Naive thymus-derived CD4-positive, alpha-beta T cell (primary cell): ENCODE measurements at regions of chr6 and their contacts with region 1.

Region 1: GRCh38 chr6:41920921-41921711 is at the starts of genes BYSL and MED20:
- DNase-seq: peak; percentile 93 to 99 (median 96)
- ATAC-seq: peak; percentile 96
- H3K4me3 ChIP-seq: peak within 1 kb of the TSS; percentile 76
- H3K4me3 Mint-ChIP-seq: peak within 1 kb of the TSS; percentile 95 to 100 (median 99)
- H3K27ac ChIP-seq: peak within 1 kb of the TSS; percentile 95
- H3K27ac Mint-ChIP-seq: peak within 1 kb of the TSS; percentile 94 to 100 (median 99)
- H3K4me1 ChIP-seq: peaks cover 20 to 24% of the 10 kb centered on the region in 2 donors
- H3K4me1 Mint-ChIP-seq: peaks cover 27 to 58% (median 50%) of the 10 kb centered on the region in 7 donors
- H3K27me3 ChIP-seq: no peaks in the 10 kb centered on the region
- H3K27me3 Mint-ChIP-seq: peaks cover 0 to 3% (median 0%) of the 10 kb centered on the region in 5 donors
- total RNA-seq, gene BYSL: 3.9 to 35.7 (median 8.1) TPM
- total RNA-seq, gene MED20: 4.5 to 21.7 (median 9.4) TPM

Region 2: GRCh38 chr6:41901882-41902519 is 19.1 kb before region 1 on chr6:
- CTCF ChIA-PET with region 1: interaction called, 3 read pairs
- POLR2A ChIA-PET with region 1: no interaction called
- intact Hi-C with region 1: loop called in 1 of 2 experiments (anchors 2 kb)
- DNase-seq: peak in 8 of 9 donors; percentile 42 to 66 (median 52)
- ATAC-seq: peak; percentile 78
- H3K4me3 ChIP-seq: no peak overlapping the region
- H3K4me3 Mint-ChIP-seq: no peak overlapping the region
- H3K27ac ChIP-seq: no peak overlapping the region
- H3K27ac Mint-ChIP-seq: peak overlapping the region in 7 of 9 donors; percentile 5 to 61 (median 14)
- H3K4me1 ChIP-seq: peaks cover 0 to 7% of the 10 kb centered on the region in 2 donors
- H3K4me1 Mint-ChIP-seq: peaks cover 8 to 27% (median 23%) of the 10 kb centered on the region in 7 donors
- H3K27me3 ChIP-seq: no peaks in the 10 kb centered on the region
- H3K27me3 Mint-ChIP-seq: no peaks in the 10 kb centered on the region

Region 3: DNA sequence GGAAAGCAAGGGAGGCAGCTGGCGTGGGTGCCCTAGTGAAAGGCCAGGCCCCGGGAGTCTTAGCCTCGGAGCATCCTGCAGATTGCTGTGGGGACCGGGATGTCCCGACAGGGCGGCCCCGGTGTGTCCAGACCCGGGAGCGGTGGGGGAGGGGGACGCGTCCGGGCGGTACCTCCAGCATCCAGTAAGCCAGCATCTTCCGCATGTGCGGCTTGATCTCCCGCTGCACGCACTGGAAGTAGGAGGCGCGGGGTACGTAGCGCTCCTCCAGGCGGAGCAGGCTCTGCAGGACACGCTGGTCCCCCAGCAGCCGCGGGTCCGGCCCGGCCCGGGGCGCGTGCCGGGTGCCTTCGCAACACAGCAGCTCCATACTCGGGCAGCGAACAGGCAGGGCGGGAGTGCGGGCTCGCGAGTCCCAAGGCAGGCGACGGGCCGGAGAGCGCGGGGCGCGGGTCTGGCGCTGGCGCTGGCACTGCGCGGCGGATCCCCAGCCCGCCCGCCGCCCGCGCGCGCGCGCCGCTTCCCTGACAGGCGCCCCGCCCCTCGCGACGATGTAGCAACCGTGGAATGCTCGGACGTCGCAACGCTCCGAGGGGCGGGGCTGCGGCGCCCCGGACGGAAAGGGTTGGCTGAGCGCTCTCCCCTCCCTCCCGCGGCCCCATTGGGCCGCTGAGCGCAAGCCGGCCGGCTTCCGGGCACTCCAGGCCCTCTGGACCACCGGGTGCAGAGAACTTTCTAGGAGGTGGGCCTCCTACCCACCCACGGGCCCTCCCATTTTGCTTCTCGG is 20.4 kb after region 1 on chr6 and contains the start of gene CCND3:
- CTCF ChIA-PET with region 1: interaction called, 27 read pairs
- POLR2A ChIA-PET with region 1: interaction called, 22 read pairs
- intact Hi-C with region 1: loop called (anchors 1 kb)
- DNase-seq: peak; percentile 63 to 93 (median 76)
- ATAC-seq: peak; percentile 86
- H3K4me3 ChIP-seq: peak within 1 kb of the TSS; percentile 68
- H3K4me3 Mint-ChIP-seq: peak within 1 kb of the TSS; percentile 91 to 100 (median 93)
- H3K27ac ChIP-seq: peak within 1 kb of the TSS; percentile 76
- H3K27ac Mint-ChIP-seq: peak within 1 kb of the TSS; percentile 90 to 96 (median 94)
- H3K4me1 ChIP-seq: peaks cover 51 to 68% of the 10 kb centered on the region in 2 donors
- H3K4me1 Mint-ChIP-seq: peaks cover 40 to 83% (median 69%) of the 10 kb centered on the region in 7 donors
- H3K27me3 ChIP-seq: no peaks in the 10 kb centered on the region
- H3K27me3 Mint-ChIP-seq: no peaks in the 10 kb centered on the region
- total RNA-seq, gene CCND3: 285 to 433 (median 313) TPM

Region 4: DNA sequence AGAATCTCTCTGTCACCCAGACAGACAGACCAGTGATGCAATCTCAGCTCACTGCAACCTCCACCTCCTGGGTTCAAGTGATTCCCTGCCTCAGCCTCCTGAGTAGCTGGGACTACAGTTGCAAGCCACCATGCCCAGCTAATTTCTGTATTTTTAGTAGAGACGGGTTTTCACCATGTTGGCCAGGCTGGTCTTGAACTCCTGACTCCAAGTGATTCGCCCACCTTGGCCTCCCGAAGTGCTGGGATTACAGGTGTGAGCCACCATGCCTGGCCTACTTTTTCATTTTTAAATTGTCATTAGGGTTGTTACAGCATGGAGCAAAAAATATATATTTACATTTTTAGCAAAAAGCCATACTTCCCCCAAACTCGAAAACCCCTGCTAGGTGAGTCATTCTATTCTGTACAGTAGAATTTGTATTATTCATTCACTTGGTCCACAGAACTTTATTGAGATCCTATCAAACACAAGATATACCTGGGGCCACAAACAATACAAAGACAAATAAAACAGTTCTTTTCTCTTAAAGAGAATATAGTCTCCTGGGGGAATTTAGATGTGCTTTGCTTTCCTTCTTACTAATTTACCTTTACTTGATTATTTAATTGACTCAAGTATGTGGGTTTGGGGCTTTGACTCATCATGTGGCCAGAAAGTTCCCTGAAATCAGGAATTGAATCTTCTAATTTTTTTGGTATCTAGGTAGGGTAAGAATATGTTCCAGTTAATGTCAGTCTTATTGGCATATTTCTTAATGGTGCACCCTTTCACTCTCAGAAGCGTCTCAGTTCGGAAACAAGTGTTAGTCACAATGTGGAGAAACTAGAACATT is 37.1 kb after region 1 on chr6:
- CTCF ChIA-PET with region 1: no interaction called
- POLR2A ChIA-PET with region 1: no interaction called
- intact Hi-C with region 1: no loop called
- DNase-seq: no peak
- ATAC-seq: no peak
- H3K4me3 ChIP-seq: no peak overlapping the region
- H3K4me3 Mint-ChIP-seq: peak overlapping the region in 8 of 10 donors; percentile 14 to 64 (median 46)
- H3K27ac ChIP-seq: peak overlapping the region; percentile 22
- H3K27ac Mint-ChIP-seq: peak overlapping the region in 8 of 9 donors; percentile 28 to 91 (median 74)
- H3K4me1 ChIP-seq: peaks cover 18 to 33% of the 10 kb centered on the region in 2 donors
- H3K4me1 Mint-ChIP-seq: peaks cover 47 to 84% (median 66%) of the 10 kb centered on the region in 7 donors
- H3K27me3 ChIP-seq: no peaks in the 10 kb centered on the region
- H3K27me3 Mint-ChIP-seq: no peaks in the 10 kb centered on the region

Region 5: GRCh38 chr6:42050266-42051032 is 129.3 kb after region 1 on chr6 and contains the start of gene TAF8:
- CTCF ChIA-PET with region 1: interaction called, 21 read pairs
- POLR2A ChIA-PET with region 1: interaction called, 22 read pairs
- intact Hi-C with region 1: loop called (anchors 1 kb)
- DNase-seq: peak; percentile 76 to 89 (median 87)
- ATAC-seq: peak; percentile 80
- H3K4me3 ChIP-seq: peak within 1 kb of the TSS; percentile 98
- H3K4me3 Mint-ChIP-seq: peak within 1 kb of the TSS; percentile 89 to 99 (median 99)
- H3K27ac ChIP-seq: peak within 1 kb of the TSS; percentile 78
- H3K27ac Mint-ChIP-seq: peak within 1 kb of the TSS; percentile 93 to 98 (median 97)
- H3K4me1 ChIP-seq: peaks cover 24 to 27% of the 10 kb centered on the region in 2 donors
- H3K4me1 Mint-ChIP-seq: peaks cover 36 to 70% (median 51%) of the 10 kb centered on the region in 7 donors
- H3K27me3 ChIP-seq: no peaks in the 10 kb centered on the region
- H3K27me3 Mint-ChIP-seq: no peaks in the 10 kb centered on the region
- total RNA-seq, gene TAF8: 41.6 to 58.2 (median 50.8) TPM

Region 6: GRCh38 chr6:42978839-42979522 is 1057.9 kb after region 1 on chr6 and contains the start of gene PEX6:
- CTCF ChIA-PET with region 1: no interaction called
- POLR2A ChIA-PET with region 1: no interaction called
- intact Hi-C with region 1: loop called in 1 of 2 experiments (anchors 1 kb)
- DNase-seq: peak; percentile 77 to 98 (median 93)
- ATAC-seq: peak; percentile 97
- H3K4me3 ChIP-seq: peak within 1 kb of the TSS; percentile 90
- H3K4me3 Mint-ChIP-seq: peak within 1 kb of the TSS; percentile 91 to 99 (median 94)
- H3K27ac ChIP-seq: peak within 1 kb of the TSS; percentile 85
- H3K27ac Mint-ChIP-seq: peak within 1 kb of the TSS; percentile 92 to 99 (median 98)
- H3K4me1 ChIP-seq: peaks cover 30 to 32% of the 10 kb centered on the region in 2 donors
- H3K4me1 Mint-ChIP-seq: peaks cover 19 to 61% (median 47%) of the 10 kb centered on the region in 7 donors
- H3K27me3 ChIP-seq: no peaks in the 10 kb centered on the region
- H3K27me3 Mint-ChIP-seq: no peaks in the 10 kb centered on the region
- total RNA-seq, gene PEX6: 14.1 to 42.3 (median 28.0) TPM

Region 7: DNA sequence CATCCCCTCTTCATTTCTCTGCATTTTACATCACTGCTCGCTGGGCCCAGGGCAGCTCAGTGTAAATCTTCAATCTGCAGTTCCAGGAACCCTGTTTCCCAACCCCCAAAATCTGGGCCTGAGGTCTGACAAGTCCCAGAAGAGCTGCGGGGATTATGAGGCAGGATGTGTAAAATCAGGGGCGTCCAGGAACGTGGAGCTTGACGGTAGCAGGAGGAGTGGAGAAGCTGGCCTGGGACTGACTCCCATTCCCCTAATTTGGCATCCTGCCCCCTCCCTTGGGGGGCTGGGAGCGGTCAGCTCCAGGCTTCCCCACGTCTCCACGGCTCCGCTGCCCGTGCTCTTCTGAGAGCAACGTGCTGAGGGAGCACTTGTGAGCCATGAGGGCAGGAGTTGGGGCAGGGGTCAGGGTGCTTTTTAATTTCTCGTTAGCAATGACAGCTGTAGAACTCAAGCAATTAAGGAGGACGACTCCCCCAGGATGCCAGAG is 1825.5 kb after region 1 on chr6:
- CTCF ChIA-PET with region 1: no interaction called
- POLR2A ChIA-PET with region 1: no interaction called
- intact Hi-C with region 1: no loop called
- DNase-seq: no peak
- ATAC-seq: no peak
- H3K4me3 ChIP-seq: no peak overlapping the region
- H3K4me3 Mint-ChIP-seq: no peak overlapping the region
- H3K27ac ChIP-seq: no peak overlapping the region
- H3K27ac Mint-ChIP-seq: no peak overlapping the region
- H3K4me1 ChIP-seq: no peaks in the 10 kb centered on the region
- H3K4me1 Mint-ChIP-seq: peaks cover 0 to 3% (median 0%) of the 10 kb centered on the region in 7 donors
- H3K27me3 ChIP-seq: no peaks in the 10 kb centered on the region
- H3K27me3 Mint-ChIP-seq: peaks cover 0 to 20% (median 8%) of the 10 kb centered on the region in 5 donors